Heart right ventricle (tissue), 16 donors: ENCODE measurements at regions of chr11 and their contacts with region 1.

Region 1: GRCh38 chr11:31045335-31045734 is 324.2 kb downstream of the DCDC1 start:
- DNase-seq: no peak
- ATAC-seq: no peak
- H3K4me3 ChIP-seq: no peak overlapping the region
- H3K27ac ChIP-seq: no peak overlapping the region
- H3K4me1 ChIP-seq: no peaks in the 10 kb centered on the region
- H3K27me3 ChIP-seq: no peaks in the 10 kb centered on the region
- CTCF ChIP-seq: peak in 7 of 9 donors; percentile 23 to 50 (median 31)

Region 2: DNA sequence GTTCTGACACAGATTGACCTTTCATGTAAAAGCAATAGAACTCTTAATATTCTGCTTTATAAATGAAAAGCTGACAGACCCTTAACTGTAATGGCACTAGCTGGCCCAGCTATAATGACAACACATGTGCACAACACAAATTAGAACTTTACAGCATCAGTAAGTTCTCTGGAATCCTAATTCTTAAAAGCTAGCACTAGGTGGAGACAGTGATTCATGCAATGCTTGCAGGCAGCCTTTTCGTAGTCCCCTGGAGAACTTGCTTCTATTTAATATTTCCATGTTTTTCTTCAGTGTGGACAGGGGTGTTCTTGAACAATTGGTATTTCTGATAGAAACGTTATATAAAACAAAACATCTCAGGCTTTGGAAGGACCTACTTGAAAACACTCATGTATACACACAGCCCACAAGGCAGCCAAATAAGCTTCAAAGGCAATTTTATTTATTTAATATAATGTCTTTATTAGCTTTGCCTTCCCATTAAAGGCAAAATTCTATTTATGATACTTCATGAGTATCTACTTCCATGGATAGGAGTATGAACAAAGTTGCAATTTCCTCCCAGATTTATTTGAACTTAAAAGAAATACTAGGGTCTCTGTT is 84.8 kb before region 1 on chr11:
- intact Hi-C with region 1: loop called in 5 of 10 experiments (anchors 1 to 10 kb)
- DNase-seq: no peak
- ATAC-seq: peak in 1 of 8 donors; percentile 25
- H3K4me3 ChIP-seq: no peak overlapping the region
- H3K27ac ChIP-seq: no peak overlapping the region
- H3K4me1 ChIP-seq: no peaks in the 10 kb centered on the region
- H3K27me3 ChIP-seq: peaks cover 0 to 7% (median 0%) of the 10 kb centered on the region in 7 donors
- CTCF ChIP-seq: peak; percentile 15 to 73 (median 49)

Region 3: DNA sequence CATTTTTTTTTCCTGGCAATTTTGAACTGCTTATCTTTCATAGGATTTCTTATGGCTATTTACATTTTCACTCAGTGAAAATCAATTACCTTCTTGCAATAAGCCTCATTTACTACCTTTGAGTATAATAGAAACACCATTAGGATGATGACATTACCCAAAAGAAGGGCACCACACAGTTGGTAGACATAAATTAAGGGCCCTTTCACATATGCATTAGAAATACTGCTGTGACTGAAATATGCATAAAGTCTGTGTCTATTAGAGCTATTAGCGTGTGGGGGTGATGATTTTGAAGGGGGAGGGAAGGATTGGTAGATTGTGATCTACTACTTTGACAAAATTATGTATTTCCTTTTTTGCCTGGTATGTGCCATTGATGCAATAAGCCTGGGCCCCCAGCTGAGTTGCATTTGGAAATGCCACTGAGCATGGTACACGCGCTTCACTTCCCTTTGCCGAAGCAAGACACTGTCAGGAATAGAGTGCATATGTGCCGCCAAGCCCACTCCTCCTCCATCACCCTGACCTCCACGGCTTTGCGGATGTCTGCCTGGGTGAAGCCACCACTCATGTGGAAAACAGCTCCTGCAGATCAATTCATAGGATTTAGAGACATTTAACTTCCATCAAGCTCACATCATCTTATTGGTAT is 15.1 kb before region 1 on chr11:
- intact Hi-C with region 1: no loop called
- DNase-seq: no peak
- ATAC-seq: no peak
- H3K4me3 ChIP-seq: no peak overlapping the region
- H3K27ac ChIP-seq: no peak overlapping the region
- H3K4me1 ChIP-seq: no peaks in the 10 kb centered on the region
- H3K27me3 ChIP-seq: no peaks in the 10 kb centered on the region
- CTCF ChIP-seq: no peak

Region 4: GRCh38 chr11:31127290-31127689 is 82.0 kb after region 1 on chr11:
- intact Hi-C with region 1: no loop called
- DNase-seq: no peak
- ATAC-seq: no peak
- H3K4me3 ChIP-seq: no peak overlapping the region
- H3K27ac ChIP-seq: no peak overlapping the region
- H3K4me1 ChIP-seq: no peaks in the 10 kb centered on the region
- H3K27me3 ChIP-seq: no peaks in the 10 kb centered on the region
- CTCF ChIP-seq: no peak